ENCODE measurements at regions of chr7 and their contacts with region 1.

Region 1: GRCh38 chr7:111763221-111763801 is 201.0 kb upstream of the IMMP2L start:
- DNase-seq: peak; percentile 74
- H3K4me3 ChIP-seq: no peak overlapping the region
- H3K27ac ChIP-seq: no peak overlapping the region
- H3K4me1 ChIP-seq: no peaks in the 10 kb centered on the region
- H3K27me3 ChIP-seq: no peaks in the 10 kb centered on the region
- CTCF ChIP-seq: peak; percentile 76

Region 2: GRCh38 chr7:111741811-111742240 is 21.5 kb before region 1 on chr7:
- CTCF ChIA-PET with region 1: no interaction called
- POLR2A ChIA-PET with region 1: interaction called, 11 read pairs
- intact Hi-C with region 1: no loop called
- DNase-seq: peak; percentile 71
- H3K4me3 ChIP-seq: no peak overlapping the region
- H3K27ac ChIP-seq: no peak overlapping the region
- H3K4me1 ChIP-seq: no peaks in the 10 kb centered on the region
- H3K27me3 ChIP-seq: no peaks in the 10 kb centered on the region
- CTCF ChIP-seq: peak; percentile 81

Region 3: DNA sequence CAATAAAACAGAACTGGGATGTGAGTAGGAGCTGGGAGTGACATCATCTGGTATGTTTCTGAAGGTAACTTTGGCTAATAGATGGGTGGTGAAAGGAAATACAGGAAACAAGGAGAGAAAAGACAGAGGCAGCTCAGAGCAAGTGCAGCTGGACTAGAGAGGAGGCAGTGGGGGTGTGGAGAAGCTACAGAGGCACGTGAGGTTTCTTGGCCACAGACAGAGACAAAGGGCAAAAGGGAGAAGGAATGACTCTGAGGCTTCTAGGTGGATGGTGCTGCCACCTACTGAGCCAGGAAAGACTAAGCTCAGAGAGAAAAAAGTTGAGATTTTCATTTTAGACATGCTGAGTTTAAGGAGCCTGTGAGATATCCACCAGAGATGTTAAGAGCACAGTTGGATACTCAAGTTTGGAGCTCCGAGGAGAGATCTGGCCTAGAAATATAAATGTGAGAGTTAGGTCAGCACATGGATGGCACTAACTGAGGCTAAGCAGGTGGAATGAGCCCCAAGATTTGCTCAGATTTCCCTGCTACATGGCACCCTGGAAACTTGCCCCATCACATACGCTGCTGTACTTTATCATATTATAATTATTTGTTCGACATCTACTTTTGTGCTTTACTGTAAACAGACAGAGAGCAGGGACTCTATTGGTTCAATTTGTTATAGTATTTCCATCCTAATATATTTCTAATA is 92.0 kb after region 1 on chr7:
- CTCF ChIA-PET with region 1: interaction called, 62 read pairs
- POLR2A ChIA-PET with region 1: no interaction called
- intact Hi-C with region 1: loop called (anchors 1 kb)
- DNase-seq: peak; percentile 79
- H3K4me3 ChIP-seq: no peak overlapping the region
- H3K27ac ChIP-seq: no peak overlapping the region
- H3K4me1 ChIP-seq: peaks cover 2% of the 10 kb centered on the region
- H3K27me3 ChIP-seq: no peaks in the 10 kb centered on the region
- CTCF ChIP-seq: peak; percentile 74

Region 4: DNA sequence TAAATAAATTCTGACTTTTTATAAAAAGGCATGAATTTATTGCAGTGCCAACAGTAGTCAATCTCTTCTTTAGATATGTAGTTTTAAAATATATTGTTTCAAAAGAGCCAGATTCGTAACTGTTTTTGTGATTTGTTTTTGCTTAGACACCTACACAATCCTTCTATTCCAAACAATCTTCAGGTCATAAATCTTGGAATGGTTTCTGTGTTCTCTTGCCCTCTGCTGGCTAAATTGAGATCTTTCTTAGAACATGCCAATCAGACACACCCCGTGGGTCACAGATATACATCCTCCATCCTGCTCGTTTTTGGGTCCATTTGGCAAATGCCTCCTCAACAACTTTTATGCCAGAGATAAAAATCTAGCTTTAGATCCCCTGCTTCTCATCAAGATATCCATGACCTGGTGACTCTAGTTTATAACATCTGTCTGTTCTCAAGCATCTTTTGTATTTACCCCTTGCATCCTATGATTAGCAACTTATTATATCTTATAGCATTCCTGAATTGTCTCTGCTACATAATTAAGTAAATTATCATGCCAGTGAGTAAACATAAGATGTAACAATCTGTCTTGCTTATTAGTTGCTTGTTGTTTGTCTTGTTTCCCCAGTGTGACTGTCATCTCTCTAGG is 651.7 kb after region 1 on chr7:
- CTCF ChIA-PET with region 1: no interaction called
- POLR2A ChIA-PET with region 1: no interaction called
- intact Hi-C with region 1: loop called (anchors 1 kb)
- DNase-seq: peak; percentile 58
- H3K4me3 ChIP-seq: no peak overlapping the region
- H3K27ac ChIP-seq: no peak overlapping the region
- H3K4me1 ChIP-seq: no peaks in the 10 kb centered on the region
- H3K27me3 ChIP-seq: no peaks in the 10 kb centered on the region
- CTCF ChIP-seq: peak; percentile 67

Region 5: GRCh38 chr7:112437043-112437442 is 673.7 kb after region 1 on chr7:
- CTCF ChIA-PET with region 1: no interaction called
- POLR2A ChIA-PET with region 1: interaction called, 16 read pairs
- intact Hi-C with region 1: no loop called
- DNase-seq: no peak
- H3K4me3 ChIP-seq: no peak overlapping the region
- H3K27ac ChIP-seq: no peak overlapping the region
- H3K4me1 ChIP-seq: no peaks in the 10 kb centered on the region
- H3K27me3 ChIP-seq: no peaks in the 10 kb centered on the region
- CTCF ChIP-seq: no peak

Region 6: GRCh38 chr7:112452102-112452888 is 689.0 kb after region 1 on chr7:
- CTCF ChIA-PET with region 1: interaction called, 14 read pairs
- POLR2A ChIA-PET with region 1: no interaction called
- intact Hi-C with region 1: no loop called
- DNase-seq: peak; percentile 46
- H3K4me3 ChIP-seq: peak overlapping the region; percentile 90
- H3K27ac ChIP-seq: peak overlapping the region; percentile 37
- H3K4me1 ChIP-seq: peaks cover 14% of the 10 kb centered on the region
- H3K27me3 ChIP-seq: no peaks in the 10 kb centered on the region
- CTCF ChIP-seq: no peak; the same call in 1 of the 2 replicates

Region 7: GRCh38 chr7:112495810-112496462 is 732.6 kb after region 1 on chr7:
- CTCF ChIA-PET with region 1: interaction called, 4 read pairs
- POLR2A ChIA-PET with region 1: no interaction called
- intact Hi-C with region 1: loop called (anchors 5 kb)
- DNase-seq: peak; percentile 88
- H3K4me3 ChIP-seq: no peak overlapping the region
- H3K27ac ChIP-seq: no peak overlapping the region
- H3K4me1 ChIP-seq: peaks cover 11% of the 10 kb centered on the region
- H3K27me3 ChIP-seq: no peaks in the 10 kb centered on the region
- CTCF ChIP-seq: peak; percentile 74

Region 8: DNA sequence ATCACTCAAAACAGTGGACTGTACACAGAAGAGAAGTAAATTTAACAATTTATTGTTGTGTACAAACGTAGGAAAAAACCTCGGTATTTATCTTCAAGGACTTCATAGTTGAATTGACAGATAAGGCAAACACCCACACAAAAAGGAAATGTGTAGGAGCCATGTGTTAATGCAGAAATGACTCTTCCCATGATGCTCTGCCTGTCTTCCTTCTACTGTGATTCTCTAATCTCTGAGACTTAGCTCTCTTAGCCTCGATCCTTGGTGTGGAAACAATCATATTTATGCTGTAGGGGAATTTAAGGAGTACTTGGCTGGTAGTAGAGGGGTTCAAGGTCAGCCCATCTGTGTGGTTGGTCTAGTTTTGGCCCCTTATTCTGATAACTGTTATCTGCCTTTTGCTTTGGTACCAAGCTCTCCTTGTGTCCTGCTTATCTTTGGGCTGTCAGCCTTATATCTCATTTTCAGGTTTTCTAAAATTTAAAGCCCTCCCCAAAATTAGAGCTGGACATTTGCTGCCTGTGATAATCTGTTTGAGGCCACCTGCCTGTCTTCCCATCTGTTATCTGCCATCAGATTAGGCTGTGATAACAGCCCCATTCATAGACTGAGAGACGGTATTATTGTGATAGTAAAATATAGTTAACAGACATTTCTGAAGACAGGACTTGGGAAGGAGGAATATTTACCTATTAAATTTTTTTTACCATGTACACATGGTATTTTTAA is 1241.6 kb after region 1 on chr7:
- CTCF ChIA-PET with region 1: no interaction called
- POLR2A ChIA-PET with region 1: no interaction called
- intact Hi-C with region 1: no loop called
- DNase-seq: peak; percentile 11
- H3K4me3 ChIP-seq: no peak overlapping the region
- H3K27ac ChIP-seq: no peak overlapping the region
- H3K4me1 ChIP-seq: peaks cover 3% of the 10 kb centered on the region
- H3K27me3 ChIP-seq: no peaks in the 10 kb centered on the region
- CTCF ChIP-seq: no peak

Measured in A673 (cell line).